HEK293 (cell line): ENCODE measurements at regions of chr21 and their contacts with region 1.

Region 1: GRCh38 chr21:33915368-33916199 is at the start of gene ATP5PO:
- H3K4me3 ChIP-seq: peak within 1 kb of the TSS; percentile 95
- H3K27ac ChIP-seq: peak within 1 kb of the TSS; percentile 67; the same call in 1 of the 2 replicates
- H3K4me1 ChIP-seq: no peaks in the 10 kb centered on the region
- CTCF ChIP-seq: 0 out of 2 replicates have a peak, but pooled peaks have one; percentile 17

Region 2: GRCh38 chr21:33848249-33848953 is 67.2 kb before region 1 on chr21:
- CTCF ChIA-PET with region 1: interaction called, 10 read pairs
- POLR2A ChIA-PET with region 1: no interaction called
- H3K4me3 ChIP-seq: no peak overlapping the region
- H3K27ac ChIP-seq: no peak overlapping the region
- H3K4me1 ChIP-seq: peaks cover 4% of the 10 kb centered on the region; the same call in 1 of the 2 replicates
- CTCF ChIP-seq: no peak